ENCODE measurements at regions of chr1 and their contacts with region 1.

Region 1: DNA sequence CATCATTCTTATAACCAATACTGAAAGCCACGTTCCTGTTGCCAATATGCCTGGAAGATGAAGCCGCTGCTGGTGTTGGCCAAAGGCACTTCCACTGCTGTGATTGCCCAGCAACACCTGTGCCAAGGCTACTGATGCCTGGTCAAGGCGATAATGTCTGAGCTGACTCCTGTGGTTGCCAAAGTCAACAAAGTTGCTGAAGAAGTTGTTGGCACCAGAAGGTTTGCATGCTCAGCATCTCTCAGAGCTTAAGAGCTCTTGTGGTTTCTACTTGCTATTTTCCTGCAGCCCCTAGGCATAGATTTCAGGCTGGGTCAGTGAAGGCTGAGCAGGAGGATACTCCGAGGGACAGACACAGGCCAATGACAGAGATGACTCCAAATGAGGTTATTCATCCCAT is 63.4 kb upstream of the RAB3GAP2 start:
- DNase-seq: peak; percentile 94
- H3K4me3 Mint-ChIP-seq: no peak overlapping the region
- H3K27ac Mint-ChIP-seq: peak overlapping the region; percentile 84
- H3K4me1 Mint-ChIP-seq: peaks cover 32% of the 10 kb centered on the region
- H3K27me3 Mint-ChIP-seq: no peaks in the 10 kb centered on the region
- CTCF ChIP-seq: no peak

Region 2: DNA sequence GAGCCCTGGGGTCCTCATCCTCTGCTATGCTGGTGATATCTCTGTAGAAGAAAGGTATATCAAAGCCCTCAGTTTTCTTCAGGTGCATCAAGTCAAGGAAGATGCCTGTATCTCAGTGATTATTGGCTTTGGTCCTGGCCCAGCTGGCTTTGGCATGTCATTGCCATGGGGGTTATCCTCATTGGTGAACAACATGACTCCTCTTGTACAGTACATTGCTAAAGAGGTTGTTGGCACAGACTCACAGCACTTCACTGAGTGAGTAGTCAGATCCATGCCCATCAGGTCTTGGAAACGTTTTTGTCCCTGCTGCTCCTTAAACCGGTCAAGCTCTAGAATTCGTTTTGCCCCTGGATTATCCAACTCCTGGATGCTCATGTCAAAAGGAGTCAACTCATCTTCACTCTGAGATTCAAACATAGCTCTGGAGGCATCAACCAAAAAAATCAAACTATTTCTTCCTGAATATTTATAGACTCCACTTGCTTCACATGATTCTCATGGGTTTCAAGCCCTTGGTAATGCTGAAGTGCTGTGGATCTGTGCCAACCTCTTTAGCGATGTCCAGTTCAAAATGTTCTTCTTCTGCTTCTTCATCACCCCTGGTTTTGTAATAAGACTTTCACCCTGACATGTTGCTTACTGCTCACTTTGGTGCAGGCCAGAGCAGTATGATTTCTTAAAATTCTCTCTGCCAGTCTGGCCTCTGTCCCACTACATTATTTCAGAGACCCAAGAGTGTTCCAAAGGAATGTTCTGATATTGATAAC is 20.4 kb before region 1 on chr1:
- CTCF ChIA-PET with region 1: interaction called, 4 read pairs
- POLR2A ChIA-PET with region 1: interaction called, 20 read pairs
- intact Hi-C with region 1: no loop called
- DNase-seq: peak; percentile 62
- H3K4me3 Mint-ChIP-seq: no peak overlapping the region
- H3K27ac Mint-ChIP-seq: no peak overlapping the region
- H3K4me1 Mint-ChIP-seq: peaks cover 5% of the 10 kb centered on the region
- H3K27me3 Mint-ChIP-seq: no peaks in the 10 kb centered on the region
- CTCF ChIP-seq: no peak

Region 3: GRCh38 chr1:220353229-220354012 is 17.8 kb after region 1 on chr1:
- CTCF ChIA-PET with region 1: interaction called, 4 read pairs
- POLR2A ChIA-PET with region 1: interaction called, 16 read pairs
- intact Hi-C with region 1: no loop called
- DNase-seq: no peak
- H3K4me3 Mint-ChIP-seq: no peak overlapping the region
- H3K27ac Mint-ChIP-seq: no peak overlapping the region
- H3K4me1 Mint-ChIP-seq: no peaks in the 10 kb centered on the region
- H3K27me3 Mint-ChIP-seq: no peaks in the 10 kb centered on the region
- CTCF ChIP-seq: peak; percentile 20

Region 4: DNA sequence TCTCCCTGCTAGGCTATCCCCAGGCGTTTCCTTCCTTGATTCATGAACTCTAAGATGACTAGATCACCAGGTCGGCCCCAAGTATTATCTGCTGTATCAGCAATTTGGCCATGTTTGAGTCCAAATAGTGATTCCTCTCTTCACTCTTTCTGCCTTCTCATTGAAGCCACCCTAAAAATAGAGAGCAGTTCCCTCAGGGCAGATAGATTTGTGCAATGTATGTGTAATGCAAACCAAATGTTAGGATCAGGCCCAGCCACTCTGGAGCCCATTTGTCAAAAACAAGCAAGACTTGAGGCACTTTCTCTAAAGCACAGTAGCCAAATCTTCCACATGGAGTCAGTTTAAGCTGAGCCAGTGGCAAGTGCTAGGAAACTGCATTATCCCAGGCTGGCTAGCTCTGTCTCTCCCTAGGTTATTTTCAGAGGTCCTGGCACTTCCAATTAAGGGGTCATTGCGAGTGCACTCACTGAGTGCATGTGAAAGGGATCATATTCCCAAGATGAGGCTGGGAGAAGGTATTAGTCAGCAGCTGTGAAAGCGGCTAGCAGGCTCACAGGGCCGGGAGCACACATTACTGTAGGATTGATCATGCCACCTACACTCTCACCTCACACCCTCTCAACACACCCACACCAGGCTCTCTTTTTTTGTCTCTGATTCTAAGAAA is 34.5 kb after region 1 on chr1:
- CTCF ChIA-PET with region 1: interaction called, 10 read pairs
- POLR2A ChIA-PET with region 1: interaction called, 43 read pairs
- intact Hi-C with region 1: loop called (anchors 2 kb)
- DNase-seq: peak; percentile 98
- H3K4me3 Mint-ChIP-seq: peak overlapping the region; percentile 6
- H3K27ac Mint-ChIP-seq: peak overlapping the region; percentile 65
- H3K4me1 Mint-ChIP-seq: peaks cover 28% of the 10 kb centered on the region
- H3K27me3 Mint-ChIP-seq: no peaks in the 10 kb centered on the region
- CTCF ChIP-seq: no peak

Region 5: DNA sequence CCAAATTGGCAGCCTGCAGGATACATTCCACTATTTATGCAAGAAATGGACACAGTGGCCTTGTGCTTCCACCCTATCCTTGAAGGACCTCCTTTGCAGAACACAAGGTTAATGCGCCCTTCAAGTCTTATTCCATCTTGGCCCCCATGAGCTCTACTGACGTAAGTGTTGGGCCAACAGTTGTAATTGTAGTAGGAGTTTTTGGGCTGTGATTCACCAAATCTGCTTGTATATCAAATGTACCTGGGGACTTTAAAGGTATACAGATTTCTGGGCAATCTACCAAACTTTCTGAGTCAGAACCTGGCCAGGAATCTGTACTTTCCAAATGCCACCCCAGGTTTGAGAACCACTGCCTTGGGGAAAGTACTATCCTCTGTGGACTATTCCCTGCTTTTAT is 91.3 kb after region 1 on chr1:
- CTCF ChIA-PET with region 1: interaction called, 5 read pairs
- POLR2A ChIA-PET with region 1: interaction called, 20 read pairs
- intact Hi-C with region 1: no loop called
- DNase-seq: peak; percentile 98
- H3K4me3 Mint-ChIP-seq: peak overlapping the region; percentile 22
- H3K27ac Mint-ChIP-seq: peak overlapping the region; percentile 75
- H3K4me1 Mint-ChIP-seq: peaks cover 33% of the 10 kb centered on the region
- H3K27me3 Mint-ChIP-seq: no peaks in the 10 kb centered on the region
- CTCF ChIP-seq: no peak

Measured in MCF 10A (cell line).